H1 (cell line): ENCODE measurements at regions of chrX and their contacts with region 1.

Region 1: GRCh38 chrX:153667956-153668396 is 5.6 kb downstream of the PNCK start:
- DNase-seq: peak in 1 of 2 experiments; percentile 92
- H3K4me3 ChIP-seq: peak overlapping the region in 1 of 4 experiments; percentile 48; a peak in 2 of 8 replicates
- H3K27ac ChIP-seq: no peak overlapping the region
- H3K4me1 ChIP-seq: peaks cover 0 to 4% (median 0%) of the 10 kb centered on the region in 4 experiments; a peak in 2 of 7 replicates
- H3K27me3 ChIP-seq: peaks cover 0 to 2% (median 0%) of the 10 kb centered on the region in 4 experiments; a peak in 1 of 7 replicates
- CTCF ChIP-seq: peak in 2 of 3 experiments; percentile 73 to 85; a peak in 3 of 4 replicates
- EP300 ChIP-seq: no peak
- POLR2A ChIP-seq: no peak
- RAD21 ChIP-seq: peak; percentile 70 to 76

Region 2: DNA sequence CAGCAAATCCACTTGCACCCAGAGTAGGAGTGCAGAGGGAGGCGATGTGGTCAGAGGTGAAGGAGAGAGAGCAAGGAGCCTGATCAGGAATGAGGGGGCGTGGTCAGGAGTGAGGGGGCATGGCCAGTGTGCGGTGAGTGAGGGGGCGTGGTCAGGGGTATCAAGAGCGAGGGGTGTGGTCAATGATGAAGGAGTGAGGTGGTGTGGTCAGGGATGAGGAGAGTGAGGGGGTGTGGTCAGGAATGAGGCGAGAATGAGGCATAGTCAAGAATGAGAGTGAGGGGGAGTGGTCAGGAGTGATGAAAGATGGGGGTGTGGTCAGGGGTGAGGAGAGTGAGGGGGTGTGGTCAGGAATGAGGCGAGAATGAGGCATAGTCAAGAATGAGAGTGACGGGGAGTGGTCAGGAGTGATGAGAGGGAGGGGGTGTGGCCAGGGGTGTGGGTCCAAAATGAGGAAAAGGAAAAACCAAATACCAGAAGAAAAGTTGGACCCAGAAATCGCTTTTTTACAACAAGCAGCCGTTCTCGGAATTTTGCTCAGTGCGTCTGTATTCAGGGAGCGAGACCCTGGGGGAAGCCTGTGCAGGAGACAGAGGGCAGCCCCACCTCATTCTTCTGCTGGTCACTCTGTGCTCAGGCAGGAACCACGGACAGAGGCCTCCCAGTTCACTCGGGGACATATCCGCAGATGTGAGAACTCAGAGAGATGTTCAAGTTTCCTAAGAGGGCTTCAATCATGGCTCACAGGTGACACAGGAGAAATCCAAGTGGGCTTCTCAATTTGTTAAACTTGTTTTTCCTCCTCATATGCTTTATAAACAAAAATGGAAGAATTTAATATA is 441.4 kb before region 1 on chrX:
- CTCF ChIA-PET with region 1: no interaction called
- POLR2A ChIA-PET with region 1: no interaction called
- DNase-seq: peak; percentile 77 to 86
- H3K4me3 ChIP-seq: peak overlapping the region; percentile 41 to 55 (median 44); a peak in 6 of 8 replicates
- H3K27ac ChIP-seq: peak overlapping the region; percentile 36; the same call in 1 of the 2 replicates
- H3K4me1 ChIP-seq: peaks cover 0 to 8% (median 3%) of the 10 kb centered on the region in 4 experiments; a peak in 4 of 7 replicates
- H3K27me3 ChIP-seq: no peaks in the 10 kb centered on the region
- CTCF ChIP-seq: no peak
- EP300 ChIP-seq: no peak
- POLR2A ChIP-seq: no peak
- RAD21 ChIP-seq: no peak

Region 3: GRCh38 chrX:153539171-153539978 is 128.6 kb before region 1 on chrX:
- CTCF ChIA-PET with region 1: interaction called, 30 read pairs
- POLR2A ChIA-PET with region 1: no interaction called
- DNase-seq: peak; percentile 31 to 84
- H3K4me3 ChIP-seq: no peak overlapping the region
- H3K27ac ChIP-seq: no peak overlapping the region
- H3K4me1 ChIP-seq: no peaks in the 10 kb centered on the region; a peak in 1 of 7 replicates
- H3K27me3 ChIP-seq: no peaks in the 10 kb centered on the region
- CTCF ChIP-seq: peak in 2 of 3 experiments; percentile 92 to 99; a peak in 3 of 4 replicates
- EP300 ChIP-seq: no peak
- POLR2A ChIP-seq: no peak
- RAD21 ChIP-seq: peak; percentile 66 to 81

Region 4: GRCh38 chrX:153564051-153564736 is 103.8 kb before region 1 on chrX:
- CTCF ChIA-PET with region 1: interaction called, 13 read pairs
- POLR2A ChIA-PET with region 1: no interaction called
- DNase-seq: no peak
- H3K4me3 ChIP-seq: no peak overlapping the region
- H3K27ac ChIP-seq: no peak overlapping the region
- H3K4me1 ChIP-seq: peaks cover 0 to 15% (median 5%) of the 10 kb centered on the region in 4 experiments; a peak in 5 of 7 replicates
- H3K27me3 ChIP-seq: no peaks in the 10 kb centered on the region; a peak in 1 of 7 replicates
- CTCF ChIP-seq: no peak
- EP300 ChIP-seq: no peak
- POLR2A ChIP-seq: no peak
- RAD21 ChIP-seq: no peak

Region 5: DNA sequence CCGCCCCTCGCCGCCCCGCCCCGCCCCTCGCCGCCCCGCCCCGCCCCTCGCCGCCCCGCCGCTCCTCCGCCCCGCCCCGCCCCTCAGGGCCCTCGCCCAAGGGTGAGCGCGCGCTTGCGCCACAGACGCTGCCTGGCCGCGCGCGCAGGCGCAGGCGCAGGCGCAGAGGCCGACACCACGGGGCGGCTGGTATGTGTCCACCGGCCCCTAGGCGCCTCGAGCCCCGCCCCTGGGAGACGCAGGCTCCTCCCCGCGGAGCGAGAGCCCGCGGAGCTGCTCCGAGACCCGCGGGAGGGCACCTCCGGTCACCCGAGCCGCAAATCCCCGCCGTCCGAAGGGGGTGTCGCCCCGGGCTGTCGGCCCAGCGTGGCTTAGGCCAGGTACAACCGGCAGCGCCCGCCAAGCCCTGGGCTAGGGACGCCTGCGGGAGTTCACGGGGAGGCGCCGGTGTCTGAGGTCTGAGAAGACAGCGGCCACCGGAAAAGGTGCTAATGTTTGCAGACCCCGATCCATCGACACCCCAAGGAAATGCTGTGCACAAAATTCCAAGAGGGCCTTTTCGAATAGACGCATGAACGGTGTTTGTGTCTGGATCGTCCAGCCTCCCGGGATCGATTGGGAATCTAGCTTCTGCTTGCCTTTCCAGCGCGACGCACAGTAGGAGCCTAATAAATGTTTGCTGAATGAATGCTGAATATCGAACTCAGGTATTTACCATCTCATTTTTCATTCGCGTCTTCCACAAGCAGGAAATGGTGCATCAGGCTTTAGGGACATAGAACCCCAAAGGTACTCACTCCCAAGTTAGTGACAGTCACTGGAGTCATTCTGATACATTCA is 68.6 kb before region 1 on chrX:
- CTCF ChIA-PET with region 1: interaction called, 10 read pairs
- POLR2A ChIA-PET with region 1: no interaction called
- DNase-seq: peak in 1 of 2 experiments; percentile 74
- H3K4me3 ChIP-seq: peak overlapping the region; percentile 56 to 86 (median 68)
- H3K27ac ChIP-seq: no peak overlapping the region
- H3K4me1 ChIP-seq: peaks cover 0 to 4% (median 0%) of the 10 kb centered on the region in 4 experiments; a peak in 1 of 7 replicates
- H3K27me3 ChIP-seq: peaks cover 0 to 8% (median 0%) of the 10 kb centered on the region in 4 experiments; a peak in 3 of 7 replicates
- CTCF ChIP-seq: no peak
- EP300 ChIP-seq: no peak
- POLR2A ChIP-seq: no peak
- RAD21 ChIP-seq: no peak

Region 6: DNA sequence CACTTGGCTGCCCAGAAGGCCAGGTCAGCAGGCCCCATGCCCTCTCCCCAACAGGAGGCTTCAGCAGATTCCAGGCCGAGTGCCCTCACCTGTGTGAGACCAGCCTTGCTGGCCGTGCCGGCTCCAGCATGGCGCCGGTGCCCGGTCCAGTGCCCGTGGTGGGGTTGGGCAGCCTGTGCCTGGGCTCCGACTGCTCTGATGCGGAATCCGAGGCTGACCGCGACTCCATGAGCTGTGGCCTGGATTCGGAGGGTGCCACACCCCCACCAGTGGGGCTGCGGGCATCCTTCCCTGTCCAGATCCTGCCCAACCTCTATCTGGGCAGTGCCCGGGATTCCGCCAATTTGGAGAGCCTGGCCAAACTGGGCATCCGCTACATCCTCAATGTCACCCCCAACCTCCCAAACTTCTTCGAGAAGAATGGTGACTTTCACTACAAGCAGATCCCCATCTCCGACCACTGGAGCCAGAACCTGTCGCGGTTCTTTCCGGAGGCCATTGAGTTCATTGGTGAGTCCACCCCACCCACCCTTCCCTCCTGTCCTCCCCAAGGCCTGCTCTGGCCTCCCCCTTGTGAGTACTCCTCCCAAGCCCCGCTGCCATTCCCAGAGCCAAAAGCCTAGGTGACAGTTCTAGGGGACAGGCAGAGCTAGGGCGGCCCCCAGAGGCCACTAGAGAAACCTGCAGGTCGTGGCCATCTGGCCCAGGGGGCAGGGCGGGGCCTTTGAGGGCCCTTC is 18.6 kb before region 1 on chrX:
- CTCF ChIA-PET with region 1: interaction called, 408 read pairs
- POLR2A ChIA-PET with region 1: no interaction called
- DNase-seq: peak in 1 of 2 experiments; percentile 63
- H3K4me3 ChIP-seq: no peak overlapping the region
- H3K27ac ChIP-seq: no peak overlapping the region
- H3K4me1 ChIP-seq: peaks cover 0 to 10% (median 2%) of the 10 kb centered on the region in 4 experiments; a peak in 4 of 7 replicates
- H3K27me3 ChIP-seq: peaks cover 47 to 51% (median 50%) of the 10 kb centered on the region in 4 experiments
- CTCF ChIP-seq: peak in 2 of 3 experiments; percentile 54 to 85; a peak in 3 of 4 replicates
- EP300 ChIP-seq: no peak
- POLR2A ChIP-seq: no peak
- RAD21 ChIP-seq: peak; percentile 69 to 84

Region 7: GRCh38 chrX:153681175-153681574 is 13.2 kb after region 1 on chrX:
- CTCF ChIA-PET with region 1: interaction called, 24 read pairs
- POLR2A ChIA-PET with region 1: interaction called, 4 read pairs
- DNase-seq: no peak
- H3K4me3 ChIP-seq: no peak overlapping the region
- H3K27ac ChIP-seq: no peak overlapping the region
- H3K4me1 ChIP-seq: peaks cover 0 to 13% (median 5%) of the 10 kb centered on the region in 4 experiments; a peak in 5 of 7 replicates
- H3K27me3 ChIP-seq: no peaks in the 10 kb centered on the region
- CTCF ChIP-seq: no peak
- EP300 ChIP-seq: no peak
- POLR2A ChIP-seq: no peak
- RAD21 ChIP-seq: no peak